ENCODE measurements at regions of chr10 and their contacts with region 1.

Region 1: GRCh38 chr10:110893559-110894179 is 21.9 kb downstream of the PDCD4 start:
- DNase-seq: peak in 1 of 2 donors; percentile 75
- ATAC-seq: peak; percentile 75 to 91 (median 89)
- H3K4me3 ChIP-seq: no peak overlapping the region
- H3K4me3 Mint-ChIP-seq: no peak overlapping the region
- H3K27ac ChIP-seq: no peak overlapping the region
- H3K27ac Mint-ChIP-seq: no peak overlapping the region
- H3K4me1 ChIP-seq: no peaks in the 10 kb centered on the region
- H3K4me1 Mint-ChIP-seq: peaks cover 8 to 21% of the 10 kb centered on the region in 2 donors
- H3K27me3 ChIP-seq: no peaks in the 10 kb centered on the region
- H3K27me3 Mint-ChIP-seq: no peaks in the 10 kb centered on the region
- CTCF ChIP-seq: peak; percentile 69

Region 2: DNA sequence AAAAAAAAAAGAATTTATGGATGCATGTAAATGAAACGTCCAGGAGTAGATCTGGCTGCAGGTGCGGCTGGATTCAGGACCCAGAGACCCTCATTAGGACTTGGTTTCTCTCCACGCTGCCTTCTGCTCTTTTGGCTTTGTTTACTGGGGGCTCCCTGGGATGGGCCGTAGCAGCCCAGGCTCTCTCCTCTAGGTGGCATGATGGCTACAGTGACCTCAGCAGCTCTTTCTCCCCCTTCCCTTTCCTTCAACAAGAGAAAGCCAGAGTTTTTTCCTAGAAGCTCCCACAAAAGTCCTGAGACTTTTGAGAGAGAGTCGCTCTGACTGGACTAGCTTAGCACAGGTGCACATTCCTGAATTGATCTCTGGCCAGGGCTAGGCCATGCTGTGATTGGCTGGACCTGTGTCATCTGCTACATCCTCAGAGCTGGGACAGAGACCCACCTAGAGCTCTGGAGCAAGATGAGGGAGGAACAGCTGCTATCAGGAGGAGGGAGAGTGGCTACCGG is 89.8 kb before region 1 on chr10:
- intact Hi-C with region 1: loop called (anchors 1 kb)
- DNase-seq: peak; percentile 31 to 74
- ATAC-seq: peak; percentile 69 to 95 (median 91)
- H3K4me3 ChIP-seq: no peak overlapping the region
- H3K4me3 Mint-ChIP-seq: no peak overlapping the region
- H3K27ac ChIP-seq: no peak overlapping the region
- H3K27ac Mint-ChIP-seq: no peak overlapping the region
- H3K4me1 ChIP-seq: peaks cover 10% of the 10 kb centered on the region
- H3K4me1 Mint-ChIP-seq: peaks cover 14 to 15% of the 10 kb centered on the region in 2 donors
- H3K27me3 ChIP-seq: no peaks in the 10 kb centered on the region
- H3K27me3 Mint-ChIP-seq: peaks cover 9% of the 10 kb centered on the region in 2 donors
- CTCF ChIP-seq: peak; percentile 53

Region 3: DNA sequence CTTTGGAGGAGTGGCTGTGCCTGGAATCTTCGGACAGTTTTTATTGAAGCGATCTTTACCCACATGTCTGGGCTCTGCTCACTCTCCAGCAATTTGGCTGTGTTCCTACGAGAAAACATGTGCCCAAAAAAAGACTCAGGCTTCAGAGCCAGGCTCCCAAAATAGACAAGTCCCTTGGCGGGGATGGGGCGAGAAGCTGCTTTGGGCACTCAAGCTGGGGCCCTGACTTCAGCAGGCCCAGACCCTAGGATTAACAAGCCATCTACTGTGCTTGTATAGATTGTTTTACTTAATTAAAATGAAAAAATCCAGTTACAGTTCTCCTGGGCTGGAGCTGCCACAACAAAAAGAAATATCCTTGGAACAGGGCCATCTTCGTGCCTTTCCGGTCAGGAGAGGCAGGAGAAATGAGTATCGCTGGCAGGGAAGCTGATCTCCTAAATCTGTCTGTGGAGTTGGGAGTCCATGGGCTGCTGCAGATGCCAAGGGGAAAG is 73.3 kb before region 1 on chr10:
- intact Hi-C with region 1: no loop called
- DNase-seq: no peak
- ATAC-seq: no peak
- H3K4me3 ChIP-seq: no peak overlapping the region
- H3K4me3 Mint-ChIP-seq: no peak overlapping the region
- H3K27ac ChIP-seq: no peak overlapping the region
- H3K27ac Mint-ChIP-seq: no peak overlapping the region
- H3K4me1 ChIP-seq: peaks cover 9% of the 10 kb centered on the region
- H3K4me1 Mint-ChIP-seq: peaks cover 6 to 16% of the 10 kb centered on the region in 2 donors
- H3K27me3 ChIP-seq: no peaks in the 10 kb centered on the region
- H3K27me3 Mint-ChIP-seq: peaks cover 0 to 2% of the 10 kb centered on the region in 2 donors
- CTCF ChIP-seq: no peak

Region 4: DNA sequence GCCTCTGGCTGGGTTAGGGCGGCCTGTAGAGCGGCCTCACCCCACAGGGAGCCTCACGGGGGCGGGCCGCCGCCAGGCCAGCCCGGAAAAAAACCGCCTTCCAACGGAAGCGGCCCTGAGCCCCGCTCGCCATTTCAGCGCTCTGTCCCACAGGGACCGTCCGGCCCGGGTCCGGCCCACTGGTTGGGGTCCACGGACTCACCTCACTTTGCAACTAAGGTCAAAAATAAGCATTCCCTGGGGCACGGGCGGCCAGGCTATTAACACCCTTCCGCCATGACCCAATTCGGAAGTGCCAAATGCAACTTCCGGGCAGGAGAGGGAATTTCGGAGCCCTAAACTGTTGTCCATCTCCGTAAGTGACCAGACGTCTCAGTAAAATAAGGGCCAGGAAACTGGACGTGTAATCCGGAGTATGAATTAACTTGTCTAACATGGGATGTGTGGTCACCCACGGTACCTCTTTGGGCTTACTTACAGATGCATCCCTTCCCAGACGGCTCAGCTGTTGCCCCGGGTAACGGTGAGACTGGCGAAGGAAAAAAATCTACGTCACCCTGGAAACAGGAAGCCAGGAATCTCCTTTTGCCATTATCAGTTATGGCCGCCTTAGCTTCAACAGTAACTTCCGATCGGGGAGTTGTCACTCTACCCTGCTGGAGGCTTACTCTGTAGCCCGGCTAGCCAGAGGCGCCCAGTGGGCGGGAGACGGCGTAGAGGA is 25.1 kb after region 1 on chr10 and contains the start of gene BBIP1:
- intact Hi-C with region 1: no loop called
- DNase-seq: peak; percentile 81 to 99
- ATAC-seq: peak; percentile 88 to 98 (median 90)
- H3K4me3 ChIP-seq: peak within 1 kb of the TSS; percentile 86
- H3K4me3 Mint-ChIP-seq: peak within 1 kb of the TSS; percentile 97
- H3K27ac ChIP-seq: peak within 1 kb of the TSS; percentile 98
- H3K27ac Mint-ChIP-seq: peak within 1 kb of the TSS; percentile 99 to 100
- H3K4me1 ChIP-seq: peaks cover 7% of the 10 kb centered on the region
- H3K4me1 Mint-ChIP-seq: peaks cover 33 to 46% of the 10 kb centered on the region in 2 donors
- H3K27me3 ChIP-seq: no peaks in the 10 kb centered on the region
- H3K27me3 Mint-ChIP-seq: no peaks in the 10 kb centered on the region
- CTCF ChIP-seq: no peak
- total RNA-seq, gene BBIP1: 27.2 to 58.6 (median 27.7) TPM

Measured in natural killer cell (primary cell).